A549 (cell line): ENCODE measurements at regions of chr10 and their contacts with region 1.

Region 1: GRCh38 chr10:51960494-51960895 is 261.1 kb upstream of the CSTF2T start:
- DNase-seq: peak; percentile 19 to 36
- ATAC-seq: peak in 1 of 2 experiments; percentile 76; a peak in 3 of 6 replicates
- H3K4me3 ChIP-seq: no peak overlapping the region
- H3K27ac ChIP-seq: no peak overlapping the region
- H3K4me1 ChIP-seq: no peaks in the 10 kb centered on the region
- CTCF ChIP-seq: peak; percentile 66
- EP300 ChIP-seq: no peak
- POLR2A ChIP-seq: no peak
- RAD21 ChIP-seq: peak; percentile 60 to 64

Region 2: DNA sequence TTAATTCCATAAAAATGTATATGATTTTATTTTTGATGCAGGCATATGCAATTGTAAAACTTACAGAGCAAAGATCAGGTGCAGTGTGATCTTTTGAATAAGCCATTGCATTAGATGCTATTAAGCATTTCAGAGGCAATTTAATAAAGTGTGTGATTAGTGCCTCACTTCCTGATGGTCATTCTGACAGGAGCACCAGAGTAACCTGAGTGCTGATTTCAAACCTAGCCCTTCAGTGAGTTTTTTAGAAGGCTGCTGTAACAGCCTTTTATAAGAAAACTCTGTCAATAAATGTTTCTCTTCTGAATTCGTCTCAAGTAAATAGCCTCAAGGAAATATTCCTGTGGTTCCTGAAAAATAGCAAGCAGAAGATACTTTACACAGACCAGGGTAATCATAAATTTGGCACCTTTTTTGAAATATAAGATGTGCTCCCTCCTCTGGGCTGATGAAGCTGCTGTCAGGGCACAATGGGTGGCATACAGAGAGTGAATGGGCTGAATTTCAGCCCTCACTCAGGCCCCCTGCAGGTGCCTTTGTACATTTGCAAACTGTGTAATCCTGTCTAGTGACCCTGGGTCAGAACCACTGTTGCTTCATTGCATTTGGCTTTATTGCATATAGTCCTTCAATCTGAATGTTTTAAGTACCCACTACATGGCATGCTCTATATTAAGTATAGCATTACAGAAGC is 67.4 kb before region 1 on chr10:
- CTCF ChIA-PET with region 1: no interaction called
- POLR2A ChIA-PET with region 1: no interaction called
- DNase-seq: peak; percentile 1 to 17
- ATAC-seq: peak; percentile 59 to 82; a peak in 4 of 6 replicates
- H3K4me3 ChIP-seq: no peak overlapping the region
- H3K27ac ChIP-seq: no peak overlapping the region
- H3K4me1 ChIP-seq: no peaks in the 10 kb centered on the region
- CTCF ChIP-seq: no peak
- EP300 ChIP-seq: no peak
- POLR2A ChIP-seq: no peak
- RAD21 ChIP-seq: no peak

Region 3: DNA sequence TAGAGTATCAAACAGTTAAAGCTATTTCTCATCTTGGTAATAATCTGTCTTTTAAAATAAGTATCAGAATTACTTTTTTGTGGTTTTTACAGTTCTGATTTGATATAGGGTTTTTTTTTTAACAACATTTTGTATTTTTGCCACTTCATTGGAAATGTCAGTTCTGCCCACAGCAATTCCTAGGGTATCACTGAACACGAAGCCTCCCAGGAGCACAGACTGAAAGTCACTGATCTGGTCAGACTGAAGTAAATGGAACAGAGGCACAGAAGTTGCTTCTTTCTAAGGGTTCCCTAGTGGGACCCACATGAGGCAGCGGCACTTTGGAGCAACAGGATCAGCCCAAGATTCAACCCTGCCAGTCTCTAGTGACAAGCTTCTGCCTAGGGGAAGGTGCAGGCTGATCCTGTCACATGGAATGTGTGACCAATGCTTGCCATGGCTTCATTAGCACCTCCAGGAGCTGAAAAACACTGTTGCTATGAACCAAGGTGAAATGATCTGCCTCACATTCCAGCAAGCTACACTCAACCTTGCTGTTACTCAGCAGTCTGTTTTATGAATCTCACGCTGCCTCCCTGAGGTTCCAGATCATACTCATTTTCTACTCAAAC is 12.3 kb after region 1 on chr10:
- CTCF ChIA-PET with region 1: interaction called, 13 read pairs
- POLR2A ChIA-PET with region 1: no interaction called
- DNase-seq: no peak
- ATAC-seq: no peak
- H3K4me3 ChIP-seq: no peak overlapping the region
- H3K27ac ChIP-seq: no peak overlapping the region
- H3K4me1 ChIP-seq: no peaks in the 10 kb centered on the region
- CTCF ChIP-seq: no peak
- EP300 ChIP-seq: no peak
- POLR2A ChIP-seq: no peak
- RAD21 ChIP-seq: no peak

Region 4: GRCh38 chr10:52011118-52011517 is 50.6 kb after region 1 on chr10:
- CTCF ChIA-PET with region 1: no interaction called
- POLR2A ChIA-PET with region 1: no interaction called
- DNase-seq: no peak
- ATAC-seq: no peak
- H3K4me3 ChIP-seq: no peak overlapping the region
- H3K27ac ChIP-seq: no peak overlapping the region
- H3K4me1 ChIP-seq: no peaks in the 10 kb centered on the region
- CTCF ChIP-seq: no peak
- EP300 ChIP-seq: no peak
- POLR2A ChIP-seq: no peak
- RAD21 ChIP-seq: no peak